ENCODE measurements at regions of chr13 and their contacts with region 1.

Region 1: GRCh38 chr13:27424246-27425157 is at the start of gene GTF3A:
- DNase-seq: peak; percentile 71 to 96 (median 82)
- ATAC-seq: peak; percentile 55 to 74 (median 61)
- H3K4me3 ChIP-seq: peak within 1 kb of the TSS; percentile 72 to 76
- H3K4me3 Mint-ChIP-seq: peak within 1 kb of the TSS; percentile 84 to 87 (median 86)
- H3K27ac ChIP-seq: peak within 1 kb of the TSS; percentile 95
- H3K27ac Mint-ChIP-seq: peak within 1 kb of the TSS; percentile 94 to 98
- H3K4me1 ChIP-seq: peaks cover 30 to 49% of the 10 kb centered on the region in 2 experiments
- H3K4me1 Mint-ChIP-seq: peaks cover 43 to 46% (median 45%) of the 10 kb centered on the region in 3 donors
- H3K27me3 ChIP-seq: no peaks in the 10 kb centered on the region
- H3K27me3 Mint-ChIP-seq: no peaks in the 10 kb centered on the region
- total RNA-seq, gene GTF3A: 144 to 266 (median 229) TPM

Region 2: DNA sequence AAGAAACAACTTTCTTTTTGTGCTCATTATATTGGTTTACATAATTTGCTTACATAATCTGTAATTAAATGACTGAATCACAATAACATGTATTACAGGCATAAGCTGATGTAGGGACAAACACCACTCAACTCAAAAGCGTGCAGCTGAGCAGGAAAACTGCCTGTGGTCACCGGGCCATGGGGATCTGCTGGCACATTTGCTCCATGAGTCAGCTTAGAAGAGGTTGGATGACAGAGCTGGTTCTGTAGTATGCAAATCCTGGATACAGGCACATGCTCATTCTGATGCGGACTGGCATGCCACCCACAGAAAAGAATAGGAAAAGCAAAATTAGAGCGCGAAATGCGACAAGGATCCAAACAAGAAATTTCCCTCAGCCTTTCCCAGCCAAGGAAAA is 381.5 kb before region 1 on chr13:
- CTCF ChIA-PET with region 1: no interaction called
- POLR2A ChIA-PET with region 1: no interaction called
- DNase-seq: no peak
- ATAC-seq: no peak
- H3K4me3 ChIP-seq: no peak overlapping the region
- H3K4me3 Mint-ChIP-seq: no peak overlapping the region
- H3K27ac ChIP-seq: no peak overlapping the region
- H3K27ac Mint-ChIP-seq: no peak overlapping the region
- H3K4me1 ChIP-seq: peaks cover 3 to 13% of the 10 kb centered on the region in 2 experiments
- H3K4me1 Mint-ChIP-seq: peaks cover 8 to 13% (median 8%) of the 10 kb centered on the region in 3 donors
- H3K27me3 ChIP-seq: peaks cover 0 to 10% of the 10 kb centered on the region in 2 experiments
- H3K27me3 Mint-ChIP-seq: peaks cover 6 to 19% of the 10 kb centered on the region in 2 donors

Region 3: GRCh38 chr13:27339299-27339698 is 85.2 kb before region 1 on chr13:
- CTCF ChIA-PET with region 1: no interaction called
- POLR2A ChIA-PET with region 1: no interaction called
- DNase-seq: peak in 33 of 35 experiments; percentile 7 to 65 (median 32)
- ATAC-seq: peak in 3 of 4 experiments; percentile 69 to 88 (median 78)
- H3K4me3 ChIP-seq: no peak overlapping the region
- H3K4me3 Mint-ChIP-seq: no peak overlapping the region
- H3K27ac ChIP-seq: no peak overlapping the region
- H3K27ac Mint-ChIP-seq: no peak overlapping the region
- H3K4me1 ChIP-seq: no peaks in the 10 kb centered on the region
- H3K4me1 Mint-ChIP-seq: peaks cover 0 to 3% (median 3%) of the 10 kb centered on the region in 3 donors
- H3K27me3 ChIP-seq: peaks cover 0 to 37% of the 10 kb centered on the region in 2 experiments
- H3K27me3 Mint-ChIP-seq: peaks cover 7 to 9% of the 10 kb centered on the region in 2 donors

Region 4: DNA sequence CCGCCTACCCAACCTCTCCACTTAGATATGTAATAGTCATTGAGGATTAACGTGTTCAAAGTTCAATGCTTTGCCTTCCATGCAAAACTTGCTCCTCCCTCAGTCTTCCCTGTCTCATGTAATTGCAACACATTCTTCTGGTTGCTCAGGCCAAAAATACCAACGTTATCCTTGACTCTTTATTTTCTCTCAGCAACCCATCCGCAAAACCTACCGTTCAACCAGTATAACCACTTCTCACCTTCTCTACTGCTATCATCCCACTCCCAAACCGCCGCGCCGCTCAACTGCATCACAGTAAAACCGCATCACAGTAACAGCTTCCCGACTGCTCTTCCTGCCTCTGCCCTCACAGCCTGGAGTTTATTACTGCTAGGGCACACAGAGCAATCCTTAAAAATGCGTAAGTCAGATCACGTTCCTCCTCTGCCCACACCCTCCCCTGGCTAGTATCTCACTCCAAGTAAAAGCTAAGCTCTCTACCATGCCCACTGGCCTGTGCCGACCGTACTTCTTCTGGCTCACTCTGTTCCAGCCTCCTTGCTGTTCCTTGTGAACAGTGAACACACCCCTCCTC is 17.7 kb after region 1 on chr13:
- CTCF ChIA-PET with region 1: interaction called, 25 to 29 read pairs
- POLR2A ChIA-PET with region 1: interaction called, 4 to 9 read pairs
- DNase-seq: peak in 24 of 35 experiments; percentile 15 to 64 (median 36)
- ATAC-seq: peak; percentile 44 to 76 (median 62)
- H3K4me3 ChIP-seq: peak overlapping the region; percentile 5 to 11
- H3K4me3 Mint-ChIP-seq: peak overlapping the region; percentile 50 to 73 (median 68)
- H3K27ac ChIP-seq: peak overlapping the region; percentile 69
- H3K27ac Mint-ChIP-seq: peak overlapping the region; percentile 80 to 95
- H3K4me1 ChIP-seq: peaks cover 23 to 54% of the 10 kb centered on the region in 2 experiments
- H3K4me1 Mint-ChIP-seq: peaks cover 66 to 77% (median 72%) of the 10 kb centered on the region in 3 donors
- H3K27me3 ChIP-seq: no peaks in the 10 kb centered on the region
- H3K27me3 Mint-ChIP-seq: no peaks in the 10 kb centered on the region

Region 5: GRCh38 chr13:27455331-27455855 is 30.9 kb after region 1 on chr13:
- CTCF ChIA-PET with region 1: interaction called, 9 to 29 read pairs
- POLR2A ChIA-PET with region 1: interaction called, 5 to 11 read pairs
- DNase-seq: peak in 3 of 35 experiments; percentile 16 to 42 (median 20)
- ATAC-seq: peak in 1 of 4 experiments; percentile 17
- H3K4me3 ChIP-seq: peak overlapping the region; percentile 40 to 60
- H3K4me3 Mint-ChIP-seq: peak overlapping the region; percentile 83 to 93 (median 88)
- H3K27ac ChIP-seq: peak overlapping the region; percentile 79
- H3K27ac Mint-ChIP-seq: peak overlapping the region; percentile 99 to 100
- H3K4me1 ChIP-seq: peaks cover 18 to 19% of the 10 kb centered on the region in 2 experiments
- H3K4me1 Mint-ChIP-seq: peaks cover 23 to 38% (median 28%) of the 10 kb centered on the region in 3 donors
- H3K27me3 ChIP-seq: no peaks in the 10 kb centered on the region
- H3K27me3 Mint-ChIP-seq: no peaks in the 10 kb centered on the region

Measured in T-cell (primary cell).